ENCODE measurements at regions of chr19 and their contacts with region 1.

Region 1: DNA sequence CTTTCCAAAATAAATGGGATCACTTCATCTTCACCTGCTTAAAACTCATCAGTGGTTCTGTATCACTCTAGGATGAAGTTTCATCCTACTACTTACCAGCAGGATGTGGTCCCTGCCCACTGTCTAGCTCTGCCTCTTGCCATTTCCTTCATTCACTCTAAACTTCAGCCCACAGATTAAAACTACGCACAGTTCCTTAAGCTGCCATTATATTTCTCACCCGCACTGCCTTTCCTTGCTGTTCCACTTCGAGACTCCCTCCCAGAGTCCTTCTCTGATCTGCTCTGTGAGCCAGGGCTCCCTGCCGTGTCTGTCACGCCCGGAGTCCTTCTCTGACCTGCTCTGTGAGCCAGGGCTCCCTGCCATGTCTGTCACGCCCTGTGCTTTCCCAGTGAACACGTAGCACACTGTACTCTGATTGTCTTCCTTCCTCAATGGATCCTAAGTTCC is 52.0 kb upstream of the NPAS1 start:
- DNase-seq: peak; percentile 89
- ATAC-seq: peak; percentile 91

Region 2: GRCh38 chr19:46890423-46891170 is 77.0 kb before region 1 on chr19:
- intact Hi-C with region 1: no loop called
- DNase-seq: no peak
- ATAC-seq: peak; percentile 28

Region 3: DNA sequence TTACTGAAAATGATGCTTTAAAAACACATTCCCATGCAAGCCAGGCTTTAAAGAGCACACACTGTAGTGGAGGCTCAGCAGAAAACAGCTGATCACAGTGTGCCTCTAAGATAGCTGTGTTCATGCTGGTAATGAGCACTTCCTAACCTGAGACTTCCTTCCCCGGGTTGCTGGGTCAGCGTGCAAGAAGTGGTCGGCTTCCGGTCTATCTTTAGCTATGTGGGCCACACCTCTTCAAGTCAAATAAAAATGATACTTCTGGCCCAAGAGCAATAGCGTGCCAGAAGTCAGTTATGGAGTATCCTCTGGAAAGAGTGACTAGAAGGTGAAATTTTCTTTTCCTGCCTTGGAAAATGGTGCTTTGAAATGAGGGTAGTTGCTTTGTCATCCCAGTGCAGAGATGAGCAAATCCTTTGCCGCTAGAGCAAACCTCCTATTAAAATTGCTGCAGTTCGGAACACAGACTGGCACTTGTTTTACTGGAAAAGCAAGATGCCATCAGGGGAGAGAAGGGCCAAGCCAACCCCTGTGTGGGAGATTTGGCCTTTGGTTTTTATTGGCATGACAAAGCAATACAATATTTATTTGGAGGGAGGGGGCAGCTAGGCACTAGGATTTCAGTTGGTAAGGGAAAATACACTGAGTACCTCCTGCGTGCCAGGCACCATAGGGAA is 42.6 kb before region 1 on chr19:
- intact Hi-C with region 1: loop called (anchors 5 kb)
- DNase-seq: no peak
- ATAC-seq: peak; percentile 41

Region 4: GRCh38 chr19:46944918-46945628 is 22.5 kb before region 1 on chr19:
- intact Hi-C with region 1: loop called (anchors 2 kb)
- DNase-seq: peak; percentile 81
- ATAC-seq: peak; percentile 94

Region 5: GRCh38 chr19:47215581-47215980 is 248.0 kb after region 1 on chr19:
- intact Hi-C with region 1: no loop called
- DNase-seq: no peak
- ATAC-seq: no peak

Measured in Right ventricle myocardium inferior (tissue), 1 donor.